ENCODE measurements at regions of chr2 and their contacts with region 1.

Region 1: DNA sequence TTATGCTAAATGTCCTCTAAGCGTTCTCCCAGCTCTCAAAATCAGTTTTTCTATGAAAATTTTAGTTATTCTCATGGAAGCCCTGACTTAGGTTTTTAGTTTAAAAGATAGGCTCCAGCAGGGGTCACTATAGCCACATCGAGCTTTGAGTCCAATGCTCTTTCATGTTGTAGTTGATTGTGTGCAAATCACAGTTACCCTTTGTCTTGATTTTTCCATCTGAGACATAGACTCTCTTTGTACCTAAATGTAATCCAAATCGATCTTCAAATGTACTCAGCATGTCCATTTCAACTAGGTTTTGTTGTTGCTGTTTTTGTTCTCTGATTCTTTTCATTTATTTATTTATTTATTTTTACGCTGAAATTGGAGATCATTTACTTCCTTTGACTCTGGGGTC is 26.4 kb upstream of the MSTN start:
- DNase-seq: peak; percentile 70
- H3K4me3 Mint-ChIP-seq: no peak overlapping the region
- H3K27ac Mint-ChIP-seq: no peak overlapping the region
- H3K4me1 Mint-ChIP-seq: no peaks in the 10 kb centered on the region
- H3K27me3 Mint-ChIP-seq: no peaks in the 10 kb centered on the region

Region 2: GRCh38 chr2:190121971-190122370 is 33.1 kb after region 1 on chr2:
- CTCF ChIA-PET with region 1: interaction called, 5 read pairs
- intact Hi-C with region 1: loop called (anchors 2 kb)
- DNase-seq: no peak
- H3K4me3 Mint-ChIP-seq: no peak overlapping the region
- H3K27ac Mint-ChIP-seq: no peak overlapping the region
- H3K4me1 Mint-ChIP-seq: no peaks in the 10 kb centered on the region
- H3K27me3 Mint-ChIP-seq: no peaks in the 10 kb centered on the region

Region 3: DNA sequence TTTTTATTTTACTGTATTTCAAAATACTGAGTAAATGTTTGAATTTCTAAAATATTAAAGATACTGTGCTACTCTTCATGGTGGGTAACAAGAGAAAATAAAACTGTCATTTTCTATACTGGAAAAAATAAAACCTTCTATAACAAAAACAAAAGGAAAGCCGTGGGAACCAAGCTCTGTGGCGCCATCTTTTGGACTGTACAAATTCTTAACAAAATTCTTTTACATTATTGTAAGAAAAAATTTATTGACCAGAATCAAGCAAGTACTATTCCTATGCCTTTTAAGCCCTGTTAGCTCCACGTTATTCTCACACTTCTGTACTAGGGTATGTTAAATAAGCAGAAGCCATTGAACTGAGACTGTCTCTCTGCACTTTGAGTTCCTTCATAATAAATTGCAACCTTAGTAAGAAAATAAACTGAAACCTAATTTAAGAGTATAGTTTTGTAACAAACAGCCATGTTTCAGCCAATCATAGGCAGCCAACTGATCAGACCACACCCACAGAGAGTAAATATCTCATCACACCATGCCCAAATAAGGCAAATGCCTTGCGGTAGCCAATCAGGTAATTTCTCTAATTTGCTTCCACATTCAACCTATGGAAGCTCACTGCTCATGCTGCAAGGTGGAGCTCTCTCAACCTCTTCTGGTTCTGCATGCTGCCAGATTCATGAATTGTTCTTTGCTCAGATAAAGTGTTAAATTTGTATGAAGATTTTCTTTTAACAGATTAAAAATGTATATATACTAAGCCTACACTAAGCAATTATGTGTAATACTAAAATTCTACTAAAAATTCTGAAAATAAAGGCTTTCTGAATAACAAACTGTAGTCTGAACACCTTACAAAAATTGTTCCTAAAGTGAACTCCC is 188.6 kb after region 1 on chr2:
- CTCF ChIA-PET with region 1: interaction called, 3 read pairs
- intact Hi-C with region 1: loop called (anchors 1 kb)
- DNase-seq: peak; percentile 51
- H3K4me3 Mint-ChIP-seq: no peak overlapping the region
- H3K27ac Mint-ChIP-seq: no peak overlapping the region
- H3K4me1 Mint-ChIP-seq: peaks cover 2% of the 10 kb centered on the region
- H3K27me3 Mint-ChIP-seq: no peaks in the 10 kb centered on the region

Region 4: GRCh38 chr2:190319555-190320498 is 230.9 kb after region 1 on chr2 and contains the start of gene HIBCH:
- CTCF ChIA-PET with region 1: no interaction called
- intact Hi-C with region 1: loop called (anchors 1 kb)
- DNase-seq: peak; percentile 94
- H3K4me3 Mint-ChIP-seq: peak within 1 kb of the TSS; percentile 91
- H3K27ac Mint-ChIP-seq: peak within 1 kb of the TSS; percentile 88
- H3K4me1 Mint-ChIP-seq: peaks cover 39% of the 10 kb centered on the region
- H3K27me3 Mint-ChIP-seq: no peaks in the 10 kb centered on the region
- total RNA-seq, gene HIBCH: 19.2 TPM

Region 5: DNA sequence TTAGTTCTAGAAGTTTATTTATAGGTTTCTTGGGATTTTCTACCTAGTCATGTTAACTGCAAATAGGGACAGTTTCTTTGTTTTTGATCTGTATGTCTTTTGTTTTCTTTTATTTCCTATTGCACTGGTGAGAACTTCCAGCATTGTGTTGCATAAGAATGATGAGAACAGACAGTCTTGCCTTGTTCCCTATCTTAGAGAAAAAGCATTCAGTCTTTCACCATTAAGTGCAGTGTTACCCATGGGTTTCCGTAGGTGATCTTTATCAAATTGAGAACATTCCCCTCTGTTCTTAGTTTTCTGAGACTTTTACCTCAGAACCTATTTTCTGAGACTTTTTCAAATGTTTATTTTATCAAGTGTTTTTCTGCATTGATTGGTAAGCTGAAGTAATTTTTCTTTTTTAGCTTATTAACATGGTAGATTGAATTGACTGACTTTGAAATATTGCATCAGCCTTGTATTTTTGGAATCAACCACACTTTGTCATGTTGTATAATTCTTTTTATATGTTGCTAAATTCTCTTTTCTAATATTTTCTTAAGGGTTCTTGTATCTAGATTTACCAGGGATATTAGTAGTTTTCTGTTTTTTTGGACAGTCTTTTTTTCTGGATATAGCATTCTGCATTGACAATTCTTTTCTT is 336.4 kb after region 1 on chr2:
- CTCF ChIA-PET with region 1: no interaction called
- intact Hi-C with region 1: no loop called
- DNase-seq: no peak
- H3K4me3 Mint-ChIP-seq: no peak overlapping the region
- H3K27ac Mint-ChIP-seq: peak overlapping the region; percentile 62
- H3K4me1 Mint-ChIP-seq: peaks cover 58% of the 10 kb centered on the region
- H3K27me3 Mint-ChIP-seq: no peaks in the 10 kb centered on the region

Region 6: DNA sequence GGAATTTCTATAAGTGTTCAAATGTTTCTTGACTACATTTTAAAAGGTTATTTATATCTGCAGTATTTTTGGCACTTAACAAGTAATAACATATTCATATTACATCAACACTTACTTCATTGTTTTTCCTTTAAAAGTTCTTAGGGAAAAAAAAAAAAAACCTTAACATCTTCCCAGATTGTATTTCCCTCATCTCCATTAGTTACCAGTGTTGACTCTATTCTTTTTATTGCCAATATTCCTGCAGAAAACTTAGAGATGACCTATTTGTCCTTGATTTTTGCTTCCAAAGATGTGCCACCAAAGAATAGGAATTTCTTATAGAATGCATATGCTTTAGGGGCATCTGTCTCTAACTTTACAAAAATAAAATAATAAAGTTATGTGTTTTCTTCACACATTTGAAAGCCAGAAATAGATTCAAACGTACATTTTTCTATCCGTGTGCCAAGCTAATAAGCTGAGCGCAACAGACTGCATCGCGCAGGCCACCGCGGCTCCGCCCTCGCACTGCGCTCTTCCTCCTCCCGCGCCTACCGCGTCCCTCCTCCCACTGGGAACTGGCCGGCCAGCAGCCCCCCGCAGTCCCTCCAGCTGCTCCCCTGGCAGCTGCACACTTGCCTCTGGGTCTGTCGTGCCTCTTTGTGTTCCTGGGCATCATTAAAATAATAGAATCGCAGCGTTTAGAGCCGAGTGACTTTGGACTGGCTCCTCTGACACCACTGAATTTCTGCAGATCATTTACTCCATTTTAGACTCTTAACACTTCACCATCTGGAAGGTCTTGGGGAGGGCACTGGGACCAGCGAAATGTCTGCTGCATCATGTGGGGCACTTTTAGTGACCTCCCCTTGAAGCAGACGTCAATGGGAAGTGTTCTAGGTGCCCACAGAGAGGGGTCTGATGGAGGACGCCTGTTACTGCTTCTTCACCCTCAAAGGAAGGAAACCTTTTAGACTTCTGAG is 538.8 kb after region 1 on chr2:
- CTCF ChIA-PET with region 1: no interaction called
- intact Hi-C with region 1: loop called (anchors 2 kb)
- DNase-seq: peak; percentile 32
- H3K4me3 Mint-ChIP-seq: peak overlapping the region; percentile 80
- H3K27ac Mint-ChIP-seq: no peak overlapping the region
- H3K4me1 Mint-ChIP-seq: peaks cover 12% of the 10 kb centered on the region
- H3K27me3 Mint-ChIP-seq: no peaks in the 10 kb centered on the region

Measured in activated naive CD4-positive, alpha-beta T cell treated with anti-CD3 and anti-CD28 coated beads for 36 hours (primary cell).